ENCODE measurements at regions of chr19 and their contacts with region 1.

Region 1: GRCh38 chr19:3132971-3133792 is 2.7 kb upstream of the GNA15 start:
- DNase-seq: peak; percentile 81
- H3K4me3 Mint-ChIP-seq: peak overlapping the region; percentile 70
- H3K27ac Mint-ChIP-seq: peak overlapping the region; percentile 96
- H3K4me1 Mint-ChIP-seq: peaks cover 30% of the 10 kb centered on the region
- H3K27me3 Mint-ChIP-seq: peaks cover 2% of the 10 kb centered on the region

Region 2: GRCh38 chr19:3062168-3063102 is 70.7 kb before region 1 on chr19 and contains the start of gene TLE5:
- intact Hi-C with region 1: loop called (anchors 2 kb)
- DNase-seq: peak; percentile 68
- H3K4me3 Mint-ChIP-seq: peak within 1 kb of the TSS; percentile 91
- H3K27ac Mint-ChIP-seq: peak within 1 kb of the TSS; percentile 99
- H3K4me1 Mint-ChIP-seq: peaks cover 20% of the 10 kb centered on the region
- H3K27me3 Mint-ChIP-seq: no peaks in the 10 kb centered on the region
- total RNA-seq, gene TLE5: 378 and 399 TPM in 2 replicates

Region 3: GRCh38 chr19:3146677-3147100 is 13.5 kb after region 1 on chr19:
- intact Hi-C with region 1: loop called (anchors 1 kb)
- DNase-seq: peak; percentile 53
- H3K4me3 Mint-ChIP-seq: no peak overlapping the region
- H3K27ac Mint-ChIP-seq: peak overlapping the region; percentile 18
- H3K4me1 Mint-ChIP-seq: peaks cover 38% of the 10 kb centered on the region
- H3K27me3 Mint-ChIP-seq: no peaks in the 10 kb centered on the region

Region 4: DNA sequence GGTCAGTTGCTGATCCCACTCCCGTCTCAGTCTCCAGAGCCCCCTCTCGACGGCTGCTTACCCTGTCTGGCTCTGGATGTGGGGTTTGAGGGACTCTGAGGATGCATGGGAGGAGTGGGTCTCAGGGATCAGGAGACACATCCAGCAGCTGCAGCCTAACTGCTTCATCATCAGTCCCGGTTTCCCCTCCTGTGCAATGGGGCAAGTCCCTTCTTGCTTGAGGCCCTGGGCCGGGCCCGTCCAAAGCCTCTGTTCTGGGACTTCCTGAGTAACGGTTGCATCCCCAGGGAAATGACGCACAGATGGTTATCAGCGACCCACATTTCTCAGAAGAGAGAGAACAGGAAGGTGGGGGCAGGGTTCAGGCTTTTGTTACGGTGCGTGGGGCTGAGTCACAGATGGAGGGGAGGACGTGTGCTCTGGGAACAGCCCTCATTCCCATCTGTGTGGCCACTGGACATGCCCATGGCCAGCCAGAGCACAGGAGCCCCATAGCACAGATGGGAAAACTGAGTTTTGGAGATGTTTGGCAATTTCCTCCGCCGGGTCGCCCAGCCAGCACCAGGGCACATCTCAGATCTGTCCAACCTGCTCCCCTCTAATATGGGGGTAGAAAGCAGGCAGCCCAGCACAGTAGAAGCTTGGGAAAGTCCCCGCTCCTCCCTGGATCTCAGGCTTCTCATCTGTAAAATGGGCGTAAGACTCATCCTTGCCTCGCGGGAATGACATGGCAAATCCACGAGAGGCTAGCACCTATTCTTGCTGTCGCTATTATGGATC is 22.0 kb after region 1 on chr19:
- intact Hi-C with region 1: loop called (anchors 1 kb)
- DNase-seq: peak; percentile 84
- H3K4me3 Mint-ChIP-seq: no peak overlapping the region
- H3K27ac Mint-ChIP-seq: no peak overlapping the region
- H3K4me1 Mint-ChIP-seq: peaks cover 17% of the 10 kb centered on the region
- H3K27me3 Mint-ChIP-seq: no peaks in the 10 kb centered on the region

Region 5: DNA sequence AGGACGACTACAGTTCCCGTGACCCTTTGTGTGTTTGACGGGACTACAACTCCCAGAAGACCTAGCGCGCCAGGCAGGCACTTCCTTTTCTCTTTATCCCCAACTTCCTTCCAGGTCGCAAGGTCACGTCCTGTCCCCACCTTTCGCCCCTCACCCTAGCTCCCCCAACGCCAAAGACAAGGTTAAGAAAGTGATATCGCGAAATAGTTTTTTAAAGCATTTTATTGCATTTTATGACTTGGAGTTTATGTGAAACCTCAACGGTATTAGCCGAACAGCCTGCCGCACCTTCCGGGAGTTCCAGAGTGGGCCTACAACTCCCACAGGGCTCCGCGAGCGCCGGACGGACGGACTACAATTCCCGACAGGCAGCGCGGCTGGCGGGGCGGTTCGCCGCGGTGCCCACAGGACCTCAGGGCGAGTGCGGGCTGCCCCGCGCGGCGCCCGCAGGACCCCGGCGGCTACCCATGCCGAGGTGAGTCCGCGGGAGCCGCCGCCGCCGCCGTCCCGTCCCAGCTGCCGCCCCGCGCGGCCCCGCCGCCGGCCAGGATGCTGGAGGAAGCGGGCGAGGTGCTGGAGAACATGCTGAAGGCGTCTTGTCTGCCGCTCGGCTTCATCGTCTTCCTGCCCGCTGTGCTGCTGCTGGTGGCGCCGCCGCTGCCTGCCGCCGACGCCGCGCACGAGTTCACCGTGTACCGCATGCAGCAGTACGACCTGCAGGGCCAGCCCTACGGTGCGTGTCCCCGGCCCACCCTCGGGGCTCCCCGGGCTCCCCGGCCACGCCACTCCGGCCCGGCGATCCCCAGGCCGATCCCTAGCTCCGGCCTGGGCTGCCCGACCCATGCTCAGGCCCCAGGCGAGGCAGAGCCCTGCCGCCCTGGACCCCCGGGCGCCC is 52.5 kb after region 1 on chr19 and contains the start of gene NCLN:
- intact Hi-C with region 1: loop called (anchors 1 kb)
- DNase-seq: peak; percentile 91
- H3K4me3 Mint-ChIP-seq: peak within 1 kb of the TSS; percentile 93
- H3K27ac Mint-ChIP-seq: peak within 1 kb of the TSS; percentile 90
- H3K4me1 Mint-ChIP-seq: peaks cover 45% of the 10 kb centered on the region
- H3K27me3 Mint-ChIP-seq: no peaks in the 10 kb centered on the region
- total RNA-seq, gene NCLN: 112 and 118 TPM in 2 replicates

Region 6: GRCh38 chr19:3387645-3388589 is 254.7 kb after region 1 on chr19:
- intact Hi-C with region 1: no loop called
- DNase-seq: no peak
- H3K4me3 Mint-ChIP-seq: no peak overlapping the region
- H3K27ac Mint-ChIP-seq: no peak overlapping the region
- H3K4me1 Mint-ChIP-seq: no peaks in the 10 kb centered on the region
- H3K27me3 Mint-ChIP-seq: no peaks in the 10 kb centered on the region